ENCODE measurements at regions of chr16 and their contacts with region 1.

Region 1: DNA sequence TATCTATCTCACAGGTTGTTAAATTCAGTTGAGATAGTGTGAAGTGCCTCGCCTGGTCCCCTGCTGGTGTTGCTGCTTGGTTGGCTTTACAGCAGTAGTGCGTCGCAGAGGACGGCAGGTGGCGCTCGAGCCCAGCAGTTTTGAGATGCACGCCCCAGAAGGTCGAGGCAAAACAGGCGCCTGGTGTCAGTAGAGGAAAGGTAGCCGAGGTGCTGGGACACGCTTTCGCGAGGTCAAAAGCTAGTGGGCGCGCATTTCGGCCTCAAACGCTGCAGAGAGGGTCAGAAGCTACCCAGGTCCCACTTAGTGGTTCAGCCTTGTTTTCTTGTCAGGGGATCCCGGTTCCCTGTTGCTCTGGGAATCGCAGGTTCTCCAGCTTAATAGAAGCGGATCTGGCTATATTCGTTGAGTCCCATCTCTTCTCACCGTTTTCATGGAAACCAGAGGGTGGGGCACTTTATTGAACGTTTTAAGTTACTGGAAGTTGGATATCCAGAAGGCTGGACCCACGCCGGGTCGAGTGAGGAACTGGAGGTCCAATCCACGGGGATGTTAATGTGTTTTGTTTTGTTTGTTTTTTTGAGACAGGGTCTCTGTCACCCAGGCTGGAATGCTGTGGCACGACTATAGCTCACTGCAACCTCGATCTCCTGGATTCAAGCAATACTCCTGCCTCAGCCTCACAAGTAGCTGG is 10.3 kb upstream of the ZFP90 start:
- DNase-seq: peak; percentile 80 to 91 (median 87)
- ATAC-seq: peak; percentile 92
- H3K4me3 ChIP-seq: no peak overlapping the region
- H3K4me3 Mint-ChIP-seq: peak overlapping the region; percentile 71 to 95 (median 90)
- H3K27ac ChIP-seq: no peak overlapping the region
- H3K27ac Mint-ChIP-seq: peak overlapping the region; percentile 45 to 94 (median 82)
- H3K4me1 ChIP-seq: peaks cover 7 to 19% of the 10 kb centered on the region in 2 donors
- H3K4me1 Mint-ChIP-seq: peaks cover 13 to 24% (median 21%) of the 10 kb centered on the region in 7 donors
- H3K27me3 ChIP-seq: no peaks in the 10 kb centered on the region
- H3K27me3 Mint-ChIP-seq: peaks cover 0 to 2% (median 0%) of the 10 kb centered on the region in 5 donors

Region 2: GRCh38 chr16:68538880-68539701 is 10.3 kb after region 1 on chr16 and contains the start of gene ZFP90:
- CTCF ChIA-PET with region 1: interaction called, 5 read pairs
- POLR2A ChIA-PET with region 1: interaction called, 9 read pairs
- intact Hi-C with region 1: loop called (anchors 1 kb)
- DNase-seq: peak; percentile 82 to 91 (median 88)
- ATAC-seq: peak; percentile 94
- H3K4me3 ChIP-seq: peak within 1 kb of the TSS; percentile 66
- H3K4me3 Mint-ChIP-seq: peak within 1 kb of the TSS; percentile 86 to 99 (median 97)
- H3K27ac ChIP-seq: peak within 1 kb of the TSS; percentile 94
- H3K27ac Mint-ChIP-seq: peak within 1 kb of the TSS; percentile 97 to 100 (median 100)
- H3K4me1 ChIP-seq: peaks cover 13 to 14% of the 10 kb centered on the region in 2 donors
- H3K4me1 Mint-ChIP-seq: peaks cover 13 to 32% (median 24%) of the 10 kb centered on the region in 7 donors
- H3K27me3 ChIP-seq: no peaks in the 10 kb centered on the region
- H3K27me3 Mint-ChIP-seq: no peaks in the 10 kb centered on the region
- total RNA-seq, gene ZFP90: 25.7 to 49.4 (median 38.8) TPM

Region 3: GRCh38 chr16:68629351-68629910 is 100.6 kb after region 1 on chr16:
- CTCF ChIA-PET with region 1: no interaction called
- POLR2A ChIA-PET with region 1: no interaction called
- intact Hi-C with region 1: loop called in 1 of 2 experiments (anchors 1 kb)
- DNase-seq: no peak
- ATAC-seq: no peak
- H3K4me3 ChIP-seq: no peak overlapping the region
- H3K4me3 Mint-ChIP-seq: no peak overlapping the region
- H3K27ac ChIP-seq: no peak overlapping the region
- H3K27ac Mint-ChIP-seq: peak overlapping the region in 1 of 9 donors; percentile 20
- H3K4me1 ChIP-seq: no peaks in the 10 kb centered on the region
- H3K4me1 Mint-ChIP-seq: no peaks in the 10 kb centered on the region
- H3K27me3 ChIP-seq: no peaks in the 10 kb centered on the region
- H3K27me3 Mint-ChIP-seq: peaks cover 0 to 4% (median 0%) of the 10 kb centered on the region in 5 donors

Region 4: GRCh38 chr16:68800257-68800875 is 271.5 kb after region 1 on chr16:
- CTCF ChIA-PET with region 1: interaction called, 10 read pairs
- POLR2A ChIA-PET with region 1: no interaction called
- intact Hi-C with region 1: loop called (anchors 1 kb)
- DNase-seq: peak in 8 of 9 donors; percentile 7 to 48 (median 28)
- ATAC-seq: peak; percentile 65
- H3K4me3 ChIP-seq: no peak overlapping the region
- H3K4me3 Mint-ChIP-seq: no peak overlapping the region
- H3K27ac ChIP-seq: no peak overlapping the region
- H3K27ac Mint-ChIP-seq: peak overlapping the region in 1 of 9 donors; percentile 39
- H3K4me1 ChIP-seq: no peaks in the 10 kb centered on the region
- H3K4me1 Mint-ChIP-seq: peaks cover 0 to 3% (median 0%) of the 10 kb centered on the region in 7 donors
- H3K27me3 ChIP-seq: no peaks in the 10 kb centered on the region
- H3K27me3 Mint-ChIP-seq: peaks cover 0 to 1% (median 0%) of the 10 kb centered on the region in 5 donors

Region 5: GRCh38 chr16:69123910-69124309 is 595.1 kb after region 1 on chr16:
- CTCF ChIA-PET with region 1: interaction called, 18 read pairs
- POLR2A ChIA-PET with region 1: no interaction called
- intact Hi-C with region 1: loop called (anchors 1 kb)
- DNase-seq: peak in 8 of 9 donors; percentile 30 to 77 (median 68)
- ATAC-seq: peak; percentile 89
- H3K4me3 ChIP-seq: no peak overlapping the region
- H3K4me3 Mint-ChIP-seq: no peak overlapping the region
- H3K27ac ChIP-seq: no peak overlapping the region
- H3K27ac Mint-ChIP-seq: peak overlapping the region in 3 of 9 donors; percentile 22 to 60 (median 28)
- H3K4me1 ChIP-seq: peaks cover 0 to 4% of the 10 kb centered on the region in 2 donors
- H3K4me1 Mint-ChIP-seq: peaks cover 10 to 33% (median 23%) of the 10 kb centered on the region in 7 donors
- H3K27me3 ChIP-seq: no peaks in the 10 kb centered on the region
- H3K27me3 Mint-ChIP-seq: no peaks in the 10 kb centered on the region

Region 6: DNA sequence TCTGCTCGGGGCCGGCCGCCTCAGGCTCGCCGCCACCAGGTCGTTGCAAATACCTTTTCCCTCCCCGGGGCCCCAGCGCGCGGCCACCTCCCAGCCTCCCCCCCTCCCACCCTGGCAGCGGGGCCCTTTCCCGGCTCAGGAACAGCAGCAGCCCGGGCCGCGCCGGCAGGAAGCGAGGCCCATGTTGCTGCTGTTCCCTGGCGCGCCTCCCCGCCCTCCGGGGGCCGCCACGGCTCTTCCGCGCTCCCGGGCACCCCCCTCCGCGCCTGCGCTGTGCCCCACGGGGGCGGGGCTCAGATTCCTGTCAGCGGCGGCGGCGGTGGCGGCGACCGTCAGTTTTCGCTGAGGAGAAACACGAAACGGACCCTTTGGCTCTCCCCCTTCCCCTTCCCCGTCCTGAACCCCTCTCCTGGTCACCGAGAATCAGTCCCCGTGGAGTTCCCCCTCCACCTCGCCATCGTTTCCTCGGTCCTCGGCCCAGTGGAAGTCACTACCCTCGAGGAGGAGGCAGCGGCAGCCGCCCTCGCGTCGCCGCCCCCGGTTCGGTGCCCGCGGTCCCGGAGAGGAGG is 1036.9 kb after region 1 on chr16 and contains the start of gene NFAT5:
- CTCF ChIA-PET with region 1: no interaction called
- POLR2A ChIA-PET with region 1: no interaction called
- intact Hi-C with region 1: loop called in 1 of 2 experiments (anchors 10 kb)
- DNase-seq: peak; percentile 78 to 100 (median 96)
- ATAC-seq: peak; percentile 93
- H3K4me3 ChIP-seq: peak within 1 kb of the TSS; percentile 90
- H3K4me3 Mint-ChIP-seq: peak within 1 kb of the TSS; percentile 91 to 100 (median 97)
- H3K27ac ChIP-seq: peak within 1 kb of the TSS; percentile 97
- H3K27ac Mint-ChIP-seq: peak within 1 kb of the TSS; percentile 94 to 98 (median 96)
- H3K4me1 ChIP-seq: peaks cover 13 to 33% of the 10 kb centered on the region in 2 donors
- H3K4me1 Mint-ChIP-seq: peaks cover 39 to 59% (median 48%) of the 10 kb centered on the region in 7 donors
- H3K27me3 ChIP-seq: no peaks in the 10 kb centered on the region
- H3K27me3 Mint-ChIP-seq: no peaks in the 10 kb centered on the region
- total RNA-seq, gene NFAT5: 27.3 to 35.5 (median 34.2) TPM

Measured in naive thymus-derived CD4-positive, alpha-beta T cell (primary cell).